ENCODE measurements at regions of chr4 and their contacts with region 1.

Region 1: GRCh38 chr4:105558277-105558676 is 5.9 kb downstream of the ARHGEF38 start:
- DNase-seq: no peak
- H3K4me3 Mint-ChIP-seq: no peak overlapping the region
- H3K27ac Mint-ChIP-seq: no peak overlapping the region
- H3K4me1 Mint-ChIP-seq: no peaks in the 10 kb centered on the region
- H3K27me3 Mint-ChIP-seq: peaks cover 9% of the 10 kb centered on the region

Region 2: DNA sequence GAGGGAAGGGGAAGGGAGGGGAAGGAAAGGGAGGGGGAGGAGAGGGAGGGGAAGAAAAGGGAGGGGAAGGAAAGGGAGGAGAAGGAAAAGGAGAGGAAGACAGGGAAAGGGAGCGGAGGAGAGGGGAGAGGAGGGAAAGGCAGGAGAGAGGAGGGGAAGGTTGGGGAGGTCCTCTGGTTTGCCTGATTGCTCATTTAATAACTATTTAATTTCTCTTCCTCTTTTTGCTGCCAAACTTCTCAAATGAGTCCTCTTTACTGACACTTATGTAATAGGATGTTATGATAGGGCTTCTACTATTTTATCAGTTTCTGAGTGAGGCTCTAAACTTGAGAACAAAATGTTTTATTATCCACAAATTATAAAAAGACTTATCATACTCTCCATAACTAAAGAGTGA is 49.0 kb before region 1 on chr4:
- CTCF ChIA-PET with region 1: no interaction called
- intact Hi-C with region 1: no loop called
- DNase-seq: no peak
- H3K4me3 Mint-ChIP-seq: no peak overlapping the region
- H3K27ac Mint-ChIP-seq: no peak overlapping the region
- H3K4me1 Mint-ChIP-seq: no peaks in the 10 kb centered on the region
- H3K27me3 Mint-ChIP-seq: peaks cover 11% of the 10 kb centered on the region

Region 3: DNA sequence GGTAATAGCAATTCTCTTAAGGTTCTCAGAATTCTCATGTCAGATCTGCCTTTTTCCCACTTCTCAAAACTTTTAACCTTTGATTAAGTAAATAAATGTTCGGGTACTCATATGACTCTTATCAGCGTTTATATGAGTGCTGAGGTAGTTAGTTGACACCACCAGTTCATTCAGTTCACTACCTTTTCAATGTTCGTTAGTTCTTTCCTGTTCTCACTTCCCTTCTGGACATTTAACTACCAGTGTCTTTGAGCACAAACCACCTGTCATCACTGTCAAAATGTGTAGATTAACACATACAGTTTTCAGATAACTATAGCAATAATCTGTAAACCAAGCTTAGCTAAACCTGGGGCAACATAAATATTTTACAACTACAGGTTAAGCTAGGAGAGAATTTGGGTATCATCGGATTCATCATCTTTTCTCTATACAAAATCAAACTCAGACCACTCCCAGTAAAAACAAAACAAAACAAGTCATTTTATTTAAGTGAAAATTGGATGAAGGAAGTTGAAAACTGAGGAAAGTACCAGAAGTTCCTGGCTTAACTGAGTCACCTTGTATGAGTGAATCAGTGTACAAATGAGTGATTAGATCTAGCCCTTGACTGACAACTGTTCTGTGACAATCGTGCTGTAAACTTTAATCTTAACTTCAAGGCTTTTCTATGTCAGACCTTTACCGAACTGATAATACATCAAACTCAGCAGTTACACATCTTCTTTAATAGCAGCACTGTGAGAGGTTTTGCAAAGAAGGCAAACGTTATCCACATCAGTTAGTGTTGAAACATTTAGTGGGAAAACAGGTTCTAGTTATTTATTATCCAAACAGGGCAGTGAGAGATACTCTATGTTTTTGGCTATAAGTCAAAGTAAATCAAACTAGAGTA is 36.1 kb after region 1 on chr4:
- CTCF ChIA-PET with region 1: no interaction called
- intact Hi-C with region 1: no loop called
- DNase-seq: no peak
- H3K4me3 Mint-ChIP-seq: no peak overlapping the region
- H3K27ac Mint-ChIP-seq: no peak overlapping the region
- H3K4me1 Mint-ChIP-seq: peaks cover 2% of the 10 kb centered on the region
- H3K27me3 Mint-ChIP-seq: peaks cover 20% of the 10 kb centered on the region

Region 4: DNA sequence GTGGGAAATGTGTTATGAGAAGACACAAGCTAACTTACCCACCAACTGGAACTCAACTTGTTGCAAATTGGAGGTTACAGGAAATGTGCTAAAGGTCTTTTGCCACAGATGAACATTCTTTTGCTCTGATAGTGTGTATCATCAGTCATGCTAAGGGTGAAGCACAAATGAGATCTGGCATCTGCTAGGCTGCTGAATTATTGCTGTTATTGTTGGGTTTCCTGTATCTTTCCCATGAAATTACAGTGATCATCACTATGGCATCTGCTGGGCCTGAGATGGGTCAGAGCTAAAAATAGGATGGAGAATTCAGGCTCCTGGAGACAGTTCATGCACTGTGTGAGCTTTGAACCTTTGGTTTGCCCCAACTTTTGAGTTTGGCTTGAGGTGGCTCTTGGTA is 461.5 kb after region 1 on chr4:
- CTCF ChIA-PET with region 1: no interaction called
- intact Hi-C with region 1: loop called (anchors 5 kb)
- DNase-seq: no peak
- H3K4me3 Mint-ChIP-seq: no peak overlapping the region
- H3K27ac Mint-ChIP-seq: no peak overlapping the region
- H3K4me1 Mint-ChIP-seq: no peaks in the 10 kb centered on the region
- H3K27me3 Mint-ChIP-seq: no peaks in the 10 kb centered on the region

Measured in activated naive CD4-positive, alpha-beta T cell treated with anti-CD3 and anti-CD28 coated beads for 36 hours (primary cell).